ENCODE measurements at regions of chr20 and their contacts with region 1.

Region 1: GRCh38 chr20:44909872-44910689 is at the start of gene PABPC1L:
- DNase-seq: peak; percentile 92
- H3K4me3 Mint-ChIP-seq: peak within 1 kb of the TSS; percentile 100
- H3K27ac Mint-ChIP-seq: peak within 1 kb of the TSS; percentile 85
- H3K4me1 Mint-ChIP-seq: peaks cover 8% of the 10 kb centered on the region
- H3K27me3 Mint-ChIP-seq: no peaks in the 10 kb centered on the region
- CTCF ChIP-seq: no peak
- total RNA-seq, gene PABPC1L: 172 and 182 TPM in 2 replicates

Region 2: DNA sequence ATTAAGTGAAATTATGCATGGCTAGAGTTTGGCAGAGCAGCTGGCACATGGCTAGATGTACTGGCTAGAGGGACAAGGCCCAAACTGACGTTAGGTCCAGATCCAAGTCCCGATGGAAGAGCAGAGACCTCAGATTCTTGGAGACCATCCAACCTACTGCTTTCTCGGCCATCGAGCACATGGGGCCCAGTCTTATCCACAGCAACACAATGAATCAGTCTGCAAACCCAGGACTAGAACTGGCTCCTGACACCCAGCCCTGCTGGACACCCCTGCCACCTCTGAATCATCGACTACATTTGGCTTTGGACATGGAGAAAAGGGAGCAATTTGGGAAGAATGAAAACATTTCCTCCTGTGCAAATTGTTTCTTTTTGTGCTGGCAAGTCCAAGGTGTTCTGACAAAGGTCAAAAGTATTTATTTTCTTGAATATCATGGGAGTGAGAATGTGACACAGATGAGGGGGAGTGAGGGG is 48.5 kb before region 1 on chr20:
- CTCF ChIA-PET with region 1: no interaction called
- intact Hi-C with region 1: no loop called
- DNase-seq: no peak
- H3K4me3 Mint-ChIP-seq: no peak overlapping the region
- H3K27ac Mint-ChIP-seq: no peak overlapping the region
- H3K4me1 Mint-ChIP-seq: peaks cover 17% of the 10 kb centered on the region
- H3K27me3 Mint-ChIP-seq: no peaks in the 10 kb centered on the region
- CTCF ChIP-seq: no peak

Region 3: GRCh38 chr20:44959638-44960102 is 49.6 kb after region 1 on chr20:
- CTCF ChIA-PET with region 1: no interaction called
- intact Hi-C with region 1: loop called (anchors 2 kb)
- DNase-seq: peak; percentile 36
- H3K4me3 Mint-ChIP-seq: peak overlapping the region; percentile 77
- H3K27ac Mint-ChIP-seq: peak overlapping the region; percentile 44
- H3K4me1 Mint-ChIP-seq: peaks cover 37% of the 10 kb centered on the region
- H3K27me3 Mint-ChIP-seq: no peaks in the 10 kb centered on the region
- CTCF ChIP-seq: no peak

Region 4: DNA sequence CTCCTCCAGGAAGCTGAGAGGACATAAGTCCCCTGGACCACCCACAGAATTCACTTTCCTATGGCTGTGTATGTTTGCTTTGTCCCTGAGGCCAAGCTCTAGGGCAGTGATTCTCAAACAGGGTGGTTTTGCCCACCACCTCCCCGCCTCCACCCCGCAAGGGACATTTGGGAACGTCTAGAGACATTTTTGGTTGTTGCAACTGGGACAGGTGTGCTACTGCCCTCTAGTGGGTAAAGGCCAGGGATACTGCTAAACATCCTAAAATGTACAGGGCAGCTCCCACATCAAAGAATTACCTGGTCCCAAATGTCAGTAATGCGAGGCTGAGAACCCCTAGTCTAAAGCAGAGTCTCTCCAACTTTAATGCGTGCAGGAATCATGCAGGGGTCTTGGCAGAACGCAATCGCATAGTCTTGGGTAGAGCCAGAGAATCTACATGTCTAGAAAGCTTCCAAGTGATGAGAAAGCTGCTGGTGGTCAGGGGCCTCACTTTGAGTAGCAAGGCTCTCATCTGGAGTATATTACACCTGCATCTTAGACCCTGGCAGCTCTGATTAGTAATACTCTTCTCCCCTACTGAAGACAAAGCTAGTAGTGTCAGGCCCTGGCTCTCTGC is 185.8 kb after region 1 on chr20:
- CTCF ChIA-PET with region 1: no interaction called
- intact Hi-C with region 1: loop called (anchors 10 kb)
- DNase-seq: peak; percentile 75
- H3K4me3 Mint-ChIP-seq: no peak overlapping the region
- H3K27ac Mint-ChIP-seq: no peak overlapping the region
- H3K4me1 Mint-ChIP-seq: peaks cover 9% of the 10 kb centered on the region
- H3K27me3 Mint-ChIP-seq: no peaks in the 10 kb centered on the region
- CTCF ChIP-seq: peak; percentile 76

Measured in Calu3 (cell line).